Activated CD8-positive, alpha-beta T cell treated with anti-CD3 and anti-CD28 coated beads for 36 hours (primary cell): ENCODE measurements at regions of chr6 and their contacts with region 1.

Region 1: GRCh38 chr6:16332175-16332542 is 93.8 kb downstream of the GMPR start:
- DNase-seq: peak; percentile 90
- ATAC-seq: peak; percentile 99
- H3K4me3 Mint-ChIP-seq: no peak overlapping the region
- H3K27ac Mint-ChIP-seq: no peak overlapping the region
- H3K4me1 Mint-ChIP-seq: peaks cover 3% of the 10 kb centered on the region
- H3K27me3 Mint-ChIP-seq: no peaks in the 10 kb centered on the region
- CTCF ChIP-seq: peak; percentile 81

Region 2: GRCh38 chr6:16286148-16286522 is 46.0 kb before region 1 on chr6:
- CTCF ChIA-PET with region 1: interaction called, 15 read pairs
- POLR2A ChIA-PET with region 1: no interaction called
- intact Hi-C with region 1: no loop called
- DNase-seq: peak; percentile 31
- ATAC-seq: peak; percentile 55
- H3K4me3 Mint-ChIP-seq: no peak overlapping the region
- H3K27ac Mint-ChIP-seq: no peak overlapping the region
- H3K4me1 Mint-ChIP-seq: no peaks in the 10 kb centered on the region
- H3K27me3 Mint-ChIP-seq: no peaks in the 10 kb centered on the region
- CTCF ChIP-seq: peak; percentile 71

Region 3: GRCh38 chr6:16409531-16410441 is 77.6 kb after region 1 on chr6:
- CTCF ChIA-PET with region 1: interaction called, 25 read pairs
- POLR2A ChIA-PET with region 1: no interaction called
- intact Hi-C with region 1: loop called (anchors 5 kb)
- DNase-seq: peak; percentile 79
- ATAC-seq: peak; percentile 70
- H3K4me3 Mint-ChIP-seq: no peak overlapping the region
- H3K27ac Mint-ChIP-seq: no peak overlapping the region
- H3K4me1 Mint-ChIP-seq: peaks cover 39% of the 10 kb centered on the region
- H3K27me3 Mint-ChIP-seq: no peaks in the 10 kb centered on the region
- CTCF ChIP-seq: peak; percentile 80

Region 4: DNA sequence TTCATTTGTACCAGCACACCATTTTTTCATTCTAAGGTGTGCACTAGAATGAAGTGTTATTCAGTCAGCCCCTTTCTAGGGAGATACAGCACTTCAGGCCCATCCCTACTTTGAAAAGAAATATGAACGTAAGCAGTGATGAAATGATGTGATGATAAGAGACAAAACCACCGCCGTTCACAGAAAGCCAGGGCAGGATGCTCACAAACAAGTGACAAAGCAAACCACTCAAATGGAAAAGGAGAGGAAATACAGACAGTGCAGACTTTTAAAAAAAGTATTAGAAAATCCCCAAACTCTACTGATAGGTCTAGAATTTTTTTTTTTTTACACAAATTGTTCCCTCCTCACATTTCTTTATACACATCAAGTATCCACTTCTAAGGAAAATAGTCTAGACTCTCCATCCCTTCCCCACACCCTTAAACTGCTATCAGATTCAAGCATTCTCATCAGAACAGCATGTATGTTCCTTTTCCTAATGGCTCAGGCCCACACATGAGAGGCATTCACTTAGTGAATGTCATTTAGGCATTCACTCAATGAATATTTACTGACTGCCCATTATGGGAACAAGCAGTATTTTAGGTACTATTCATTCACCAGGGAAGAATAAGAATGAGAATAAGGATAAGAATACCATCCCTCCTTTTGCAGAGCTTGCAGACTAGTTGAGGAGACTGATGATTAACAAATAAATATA is 149.7 kb after region 1 on chr6:
- CTCF ChIA-PET with region 1: interaction called, 4 read pairs
- POLR2A ChIA-PET with region 1: no interaction called
- intact Hi-C with region 1: loop called (anchors 5 kb)
- DNase-seq: peak; percentile 84
- ATAC-seq: peak; percentile 79
- H3K4me3 Mint-ChIP-seq: peak overlapping the region; percentile 6
- H3K27ac Mint-ChIP-seq: peak overlapping the region; percentile 96
- H3K4me1 Mint-ChIP-seq: peaks cover 86% of the 10 kb centered on the region
- H3K27me3 Mint-ChIP-seq: no peaks in the 10 kb centered on the region
- CTCF ChIP-seq: no peak

Region 5: DNA sequence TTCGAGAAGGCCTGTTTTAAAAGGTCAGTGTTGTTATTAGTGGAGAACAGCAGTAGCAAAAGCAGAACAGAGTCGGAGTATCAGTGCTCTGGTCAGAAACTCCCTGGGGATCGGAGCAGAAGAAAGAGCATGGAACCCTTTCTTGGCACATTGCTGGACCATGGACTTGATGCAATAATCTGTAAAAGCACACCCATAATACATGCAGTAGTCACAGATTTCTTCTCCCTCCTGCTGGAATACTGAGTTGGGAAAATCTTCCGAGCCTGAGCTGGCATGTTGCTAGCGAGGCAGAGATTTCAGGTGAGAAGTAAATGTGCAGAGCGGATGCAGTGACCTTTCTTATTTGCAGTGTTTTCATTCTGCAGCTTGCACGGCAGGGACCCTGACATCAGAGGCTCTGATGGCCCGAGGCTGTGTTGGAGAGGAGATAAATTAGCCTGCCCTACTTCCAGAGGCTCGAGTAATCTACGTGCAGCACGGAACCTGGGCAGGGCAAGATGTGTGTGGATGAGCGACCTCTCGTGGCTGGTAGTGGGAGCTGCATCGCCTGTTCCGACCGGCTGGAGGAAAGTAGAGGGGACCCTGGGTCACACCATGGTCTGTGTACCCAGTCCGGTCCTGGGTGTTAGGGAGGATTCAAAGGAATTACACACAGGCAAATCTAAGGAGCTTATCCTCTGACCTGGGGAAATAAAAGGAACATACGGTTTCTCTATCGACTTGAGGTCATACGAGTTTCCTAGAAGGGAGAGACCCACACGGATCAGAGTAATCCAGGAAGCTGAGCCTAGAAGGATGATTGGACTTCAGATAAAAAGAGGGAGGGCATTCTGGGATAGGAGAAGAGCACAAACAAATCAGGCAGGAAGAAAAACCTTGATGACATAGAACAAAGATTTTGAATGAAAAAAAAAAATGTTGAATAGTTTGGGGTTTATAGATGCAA is 632.7 kb after region 1 on chr6:
- CTCF ChIA-PET with region 1: interaction called, 14 read pairs
- POLR2A ChIA-PET with region 1: no interaction called
- intact Hi-C with region 1: no loop called
- DNase-seq: peak; percentile 82
- ATAC-seq: peak; percentile 98
- H3K4me3 Mint-ChIP-seq: no peak overlapping the region
- H3K27ac Mint-ChIP-seq: no peak overlapping the region
- H3K4me1 Mint-ChIP-seq: peaks cover 16% of the 10 kb centered on the region
- H3K27me3 Mint-ChIP-seq: peaks cover 21% of the 10 kb centered on the region
- CTCF ChIP-seq: peak; percentile 77